CD8-positive, alpha-beta T cell (primary cell): ENCODE measurements at regions of chr10 and their contacts with region 1.

Region 1: DNA sequence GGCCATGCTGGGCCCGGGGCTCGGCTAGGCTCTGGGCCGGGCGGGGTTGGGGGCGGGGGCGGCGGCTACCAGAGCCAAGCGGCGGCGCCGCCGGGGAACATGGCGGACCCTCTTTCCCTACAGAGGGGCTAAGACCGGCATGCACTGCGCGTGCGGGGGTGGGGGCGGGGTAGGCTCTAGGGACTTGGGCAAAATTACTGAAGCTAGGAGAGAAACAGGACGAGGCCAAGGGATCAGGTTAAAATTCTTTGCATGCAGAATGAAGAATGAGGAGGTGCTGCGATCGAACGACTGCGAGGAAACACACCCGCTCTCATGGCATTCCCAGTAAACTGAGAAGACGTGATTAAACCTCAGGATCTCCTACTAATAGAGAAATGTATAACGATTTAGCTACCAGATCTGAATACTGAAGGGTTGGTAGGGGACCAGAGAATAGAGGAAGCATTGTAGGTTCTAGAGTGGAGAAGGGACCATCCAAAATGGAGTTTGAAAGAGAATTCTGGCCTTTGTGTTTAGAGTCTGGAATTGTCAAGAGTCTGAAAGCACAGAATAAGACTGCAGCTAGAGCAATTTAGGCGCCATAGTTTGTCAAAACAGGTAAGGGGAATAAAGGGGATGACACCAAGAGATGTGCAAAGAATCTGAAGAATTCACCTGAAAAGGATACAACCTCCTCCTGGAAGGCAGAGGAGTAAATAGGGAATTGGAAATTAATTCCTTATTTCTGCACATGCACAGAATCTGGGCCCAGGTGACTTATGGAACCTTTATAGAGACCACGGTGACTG is at the start of gene PPP3CB:
- DNase-seq: peak; percentile 83 to 97 (median 89)
- ATAC-seq: peak; percentile 85
- H3K4me3 ChIP-seq: peak within 1 kb of the TSS; percentile 91 to 94
- H3K4me3 Mint-ChIP-seq: peak within 1 kb of the TSS; percentile 81
- H3K27ac ChIP-seq: peak within 1 kb of the TSS; percentile 87 to 93
- H3K27ac Mint-ChIP-seq: peak within 1 kb of the TSS; percentile 95
- H3K4me1 ChIP-seq: peaks cover 33% of the 10 kb centered on the region
- H3K4me1 Mint-ChIP-seq: peaks cover 49% of the 10 kb centered on the region
- H3K27me3 ChIP-seq: no peaks in the 10 kb centered on the region
- H3K27me3 Mint-ChIP-seq: no peaks in the 10 kb centered on the region
- CTCF ChIP-seq: no peak
- total RNA-seq, gene PPP3CB: 15.8 to 17.0 TPM

Region 2: GRCh38 chr10:71782917-71783490 is 1713.1 kb before region 1 on chr10:
- CTCF ChIA-PET with region 1: no interaction called
- POLR2A ChIA-PET with region 1: no interaction called
- intact Hi-C with region 1: no loop called
- DNase-seq: no peak
- ATAC-seq: no peak
- H3K4me3 ChIP-seq: no peak overlapping the region
- H3K4me3 Mint-ChIP-seq: no peak overlapping the region
- H3K27ac ChIP-seq: no peak overlapping the region
- H3K27ac Mint-ChIP-seq: no peak overlapping the region
- H3K4me1 ChIP-seq: no peaks in the 10 kb centered on the region
- H3K4me1 Mint-ChIP-seq: no peaks in the 10 kb centered on the region
- H3K27me3 ChIP-seq: no peaks in the 10 kb centered on the region
- H3K27me3 Mint-ChIP-seq: no peaks in the 10 kb centered on the region
- CTCF ChIP-seq: no peak

Region 3: GRCh38 chr10:73246783-73247508 is 249.1 kb before region 1 on chr10 and contains the start of gene DNAJC9:
- CTCF ChIA-PET with region 1: no interaction called
- POLR2A ChIA-PET with region 1: interaction called, 8 read pairs
- intact Hi-C with region 1: loop called (anchors 1 to 2 kb)
- DNase-seq: peak; percentile 95 to 98 (median 97)
- ATAC-seq: peak; percentile 88
- H3K4me3 ChIP-seq: peak within 1 kb of the TSS; percentile 88 to 95
- H3K4me3 Mint-ChIP-seq: peak within 1 kb of the TSS; percentile 96
- H3K27ac ChIP-seq: peak within 1 kb of the TSS; percentile 85 to 89
- H3K27ac Mint-ChIP-seq: peak within 1 kb of the TSS; percentile 97
- H3K4me1 ChIP-seq: peaks cover 34% of the 10 kb centered on the region
- H3K4me1 Mint-ChIP-seq: peaks cover 59% of the 10 kb centered on the region
- H3K27me3 ChIP-seq: no peaks in the 10 kb centered on the region
- H3K27me3 Mint-ChIP-seq: no peaks in the 10 kb centered on the region
- CTCF ChIP-seq: peak; percentile 19
- total RNA-seq, gene DNAJC9: 17.6 to 18.4 TPM

Region 4: DNA sequence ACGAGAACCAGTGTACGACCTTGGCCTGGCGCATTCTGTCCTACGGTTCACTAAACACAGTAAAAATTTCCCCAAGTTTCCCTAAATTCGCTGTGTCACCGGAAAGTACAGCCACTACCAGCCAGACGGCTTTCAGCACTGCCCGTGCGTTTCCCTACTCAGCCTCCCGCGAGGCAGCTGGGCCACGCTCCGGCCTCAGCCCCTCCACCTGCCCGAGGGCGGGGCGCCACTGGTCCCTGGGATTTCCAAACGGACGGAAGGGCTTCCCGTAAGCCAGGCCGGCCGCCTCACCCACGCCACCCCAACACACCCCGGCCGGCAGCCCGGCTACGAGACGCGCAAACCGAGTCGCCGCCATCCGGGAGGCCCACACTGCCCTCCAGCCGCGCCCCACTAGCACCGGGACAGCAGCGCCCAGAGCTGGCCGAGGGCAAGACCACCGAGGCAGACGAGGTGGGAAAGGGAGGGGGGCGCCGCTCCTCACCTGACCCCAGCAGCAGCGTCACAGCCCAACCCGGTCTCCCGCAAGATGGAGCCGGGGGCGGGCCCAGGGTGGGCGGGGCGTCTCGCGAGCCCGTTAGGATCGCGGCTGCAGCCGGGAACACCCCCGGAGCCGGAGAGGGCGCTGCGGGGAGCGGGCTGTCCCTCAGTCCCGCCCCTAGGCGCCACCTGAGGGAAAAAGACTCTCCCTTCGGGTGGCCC is 82.4 kb before region 1 on chr10 and contains the start of gene ANXA7:
- CTCF ChIA-PET with region 1: no interaction called
- POLR2A ChIA-PET with region 1: interaction called, 5 read pairs
- intact Hi-C with region 1: loop called (anchors 1 kb)
- DNase-seq: peak; percentile 85 to 95 (median 94)
- ATAC-seq: peak; percentile 95
- H3K4me3 ChIP-seq: peak within 1 kb of the TSS; percentile 85 to 97
- H3K4me3 Mint-ChIP-seq: peak within 1 kb of the TSS; percentile 88
- H3K27ac ChIP-seq: peak within 1 kb of the TSS; percentile 95 to 96
- H3K27ac Mint-ChIP-seq: peak within 1 kb of the TSS; percentile 92
- H3K4me1 ChIP-seq: peaks cover 14% of the 10 kb centered on the region
- H3K4me1 Mint-ChIP-seq: peaks cover 47% of the 10 kb centered on the region
- H3K27me3 ChIP-seq: no peaks in the 10 kb centered on the region
- H3K27me3 Mint-ChIP-seq: no peaks in the 10 kb centered on the region
- CTCF ChIP-seq: no peak
- total RNA-seq, gene ANXA7: 94.8 to 95.6 TPM

Region 5: DNA sequence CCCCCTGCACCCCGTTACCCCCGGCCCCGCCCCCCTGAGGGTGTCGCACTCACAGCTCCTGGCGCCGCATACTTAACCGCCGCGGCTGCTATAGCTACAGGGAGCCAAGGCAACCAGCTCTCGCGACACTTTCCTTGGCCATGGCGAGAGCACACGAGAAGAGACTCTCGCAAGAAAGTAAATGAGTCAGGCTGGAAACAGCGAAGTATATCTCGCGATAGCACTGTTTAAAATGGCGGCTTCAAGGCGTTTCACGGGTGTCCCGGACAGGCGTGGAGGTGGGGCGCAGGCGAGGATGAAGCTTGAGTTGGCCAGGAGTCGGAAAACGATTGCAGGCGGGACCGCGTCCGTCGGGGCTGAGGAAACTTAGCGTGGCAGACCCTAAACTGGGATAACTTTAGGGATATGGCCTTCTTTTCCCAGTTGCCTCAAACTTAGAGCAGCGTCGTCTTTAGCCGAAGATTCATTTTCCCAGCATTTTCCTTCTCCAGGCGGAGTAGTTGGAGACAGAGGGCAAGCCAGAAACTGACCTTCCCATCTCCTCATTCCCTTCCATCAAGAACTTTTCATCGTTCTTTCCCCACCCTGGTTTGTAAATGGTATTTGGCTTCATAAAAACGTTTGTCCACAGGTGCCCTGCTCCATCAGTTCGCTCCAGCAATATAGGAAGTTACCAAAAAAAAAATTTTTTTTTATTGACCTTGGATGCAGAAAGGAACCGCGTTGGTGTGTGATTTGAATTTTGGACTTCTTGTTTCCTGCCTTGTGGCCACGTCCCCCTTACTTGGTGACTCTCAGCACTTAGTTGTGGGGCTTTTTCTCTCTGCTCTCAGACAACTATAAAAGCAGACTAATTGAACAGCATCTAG is 130.0 kb after region 1 on chr10:
- CTCF ChIA-PET with region 1: no interaction called
- POLR2A ChIA-PET with region 1: interaction called, 6 read pairs
- intact Hi-C with region 1: loop called (anchors 1 kb)
- DNase-seq: peak; percentile 84 to 99 (median 92)
- ATAC-seq: peak; percentile 90
- H3K4me3 ChIP-seq: peak overlapping the region; percentile 78 to 90
- H3K4me3 Mint-ChIP-seq: peak overlapping the region; percentile 95
- H3K27ac ChIP-seq: peak overlapping the region; percentile 84 to 86
- H3K27ac Mint-ChIP-seq: peak overlapping the region; percentile 98
- H3K4me1 ChIP-seq: peaks cover 16% of the 10 kb centered on the region
- H3K4me1 Mint-ChIP-seq: peaks cover 21% of the 10 kb centered on the region
- H3K27me3 ChIP-seq: no peaks in the 10 kb centered on the region
- H3K27me3 Mint-ChIP-seq: no peaks in the 10 kb centered on the region
- CTCF ChIP-seq: no peak

Region 6: GRCh38 chr10:73785221-73785720 is 289.2 kb after region 1 on chr10 and contains the start of gene ZSWIM8:
- CTCF ChIA-PET with region 1: no interaction called
- POLR2A ChIA-PET with region 1: interaction called, 3 read pairs
- intact Hi-C with region 1: loop called (anchors 2 to 5 kb)
- DNase-seq: peak; percentile 70 to 96 (median 85)
- ATAC-seq: peak; percentile 84
- H3K4me3 ChIP-seq: peak within 1 kb of the TSS; percentile 68 to 81
- H3K4me3 Mint-ChIP-seq: peak within 1 kb of the TSS; percentile 99
- H3K27ac ChIP-seq: peak within 1 kb of the TSS; percentile 62 to 82
- H3K27ac Mint-ChIP-seq: peak within 1 kb of the TSS; percentile 95
- H3K4me1 ChIP-seq: peaks cover 41% of the 10 kb centered on the region
- H3K4me1 Mint-ChIP-seq: peaks cover 52% of the 10 kb centered on the region
- H3K27me3 ChIP-seq: no peaks in the 10 kb centered on the region
- H3K27me3 Mint-ChIP-seq: no peaks in the 10 kb centered on the region
- CTCF ChIP-seq: no peak
- total RNA-seq, gene ZSWIM8: 68.2 to 72.4 TPM

Region 7: DNA sequence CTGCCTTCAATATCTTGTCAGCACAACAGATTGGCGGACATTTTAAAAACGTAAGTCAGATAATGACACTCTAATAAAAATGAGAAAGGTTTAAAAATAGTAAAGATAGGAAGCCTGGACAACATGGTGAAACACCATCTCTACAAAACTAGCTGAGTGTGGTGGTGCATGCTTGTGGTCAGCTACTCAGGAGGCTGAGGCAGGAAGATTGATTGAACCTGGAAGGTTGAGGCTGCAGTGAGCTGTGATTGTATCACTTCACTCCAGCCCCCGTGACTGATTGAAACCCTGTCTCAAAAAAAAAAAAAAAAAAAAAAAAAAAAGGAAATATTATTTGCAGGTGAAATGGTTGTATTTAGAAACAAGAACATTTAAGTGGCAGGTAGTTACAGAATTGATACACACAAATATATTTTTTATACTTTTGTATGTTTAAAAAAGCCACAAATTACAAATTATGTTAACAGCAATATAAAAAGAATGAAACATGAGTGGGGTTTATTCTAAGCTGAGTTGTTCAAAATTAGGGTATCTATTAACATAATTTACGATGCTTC is 796.9 kb after region 1 on chr10:
- CTCF ChIA-PET with region 1: no interaction called
- POLR2A ChIA-PET with region 1: no interaction called
- intact Hi-C with region 1: no loop called
- DNase-seq: no peak
- ATAC-seq: no peak
- H3K4me3 ChIP-seq: no peak overlapping the region
- H3K4me3 Mint-ChIP-seq: no peak overlapping the region
- H3K27ac ChIP-seq: no peak overlapping the region
- H3K27ac Mint-ChIP-seq: no peak overlapping the region
- H3K4me1 ChIP-seq: no peaks in the 10 kb centered on the region
- H3K4me1 Mint-ChIP-seq: peaks cover 18% of the 10 kb centered on the region
- H3K27me3 ChIP-seq: no peaks in the 10 kb centered on the region
- H3K27me3 Mint-ChIP-seq: no peaks in the 10 kb centered on the region
- CTCF ChIP-seq: no peak

Region 8: GRCh38 chr10:75335983-75336382 is 1839.9 kb after region 1 on chr10:
- CTCF ChIA-PET with region 1: no interaction called
- POLR2A ChIA-PET with region 1: no interaction called
- intact Hi-C with region 1: no loop called
- DNase-seq: no peak
- ATAC-seq: no peak
- H3K4me3 ChIP-seq: no peak overlapping the region
- H3K4me3 Mint-ChIP-seq: no peak overlapping the region
- H3K27ac ChIP-seq: no peak overlapping the region
- H3K27ac Mint-ChIP-seq: no peak overlapping the region
- H3K4me1 ChIP-seq: no peaks in the 10 kb centered on the region
- H3K4me1 Mint-ChIP-seq: no peaks in the 10 kb centered on the region
- H3K27me3 ChIP-seq: no peaks in the 10 kb centered on the region
- H3K27me3 Mint-ChIP-seq: peaks cover 8% of the 10 kb centered on the region
- CTCF ChIP-seq: no peak